ENCODE measurements at regions of chr5 and their contacts with region 1.

Region 1: GRCh38 chr5:1737790-1738405 is 61.7 kb downstream of the MRPL36 start:
- DNase-seq: peak; percentile 19

Region 2: GRCh38 chr5:912280-913091 is 825.4 kb before region 1 on chr5:
- intact Hi-C with region 1: loop called (anchors 5 kb)
- DNase-seq: no peak